Activated T-helper 1 cell treated with anti-CD3 and anti-CD28 coated beads, Interleukin-12 subunit alpha, Interleukin-12 subunit beta, Interleukin-2, Interleukin-4 antibody, amounts not matched to agents 30 ng/mL and 10 ng/mL and 1 ng/mL, durations not matched to agents 14 hours and 24 hours and 36 hours (primary cell): ENCODE measurements at regions of chr2 and their contacts with region 1.

Region 1: DNA sequence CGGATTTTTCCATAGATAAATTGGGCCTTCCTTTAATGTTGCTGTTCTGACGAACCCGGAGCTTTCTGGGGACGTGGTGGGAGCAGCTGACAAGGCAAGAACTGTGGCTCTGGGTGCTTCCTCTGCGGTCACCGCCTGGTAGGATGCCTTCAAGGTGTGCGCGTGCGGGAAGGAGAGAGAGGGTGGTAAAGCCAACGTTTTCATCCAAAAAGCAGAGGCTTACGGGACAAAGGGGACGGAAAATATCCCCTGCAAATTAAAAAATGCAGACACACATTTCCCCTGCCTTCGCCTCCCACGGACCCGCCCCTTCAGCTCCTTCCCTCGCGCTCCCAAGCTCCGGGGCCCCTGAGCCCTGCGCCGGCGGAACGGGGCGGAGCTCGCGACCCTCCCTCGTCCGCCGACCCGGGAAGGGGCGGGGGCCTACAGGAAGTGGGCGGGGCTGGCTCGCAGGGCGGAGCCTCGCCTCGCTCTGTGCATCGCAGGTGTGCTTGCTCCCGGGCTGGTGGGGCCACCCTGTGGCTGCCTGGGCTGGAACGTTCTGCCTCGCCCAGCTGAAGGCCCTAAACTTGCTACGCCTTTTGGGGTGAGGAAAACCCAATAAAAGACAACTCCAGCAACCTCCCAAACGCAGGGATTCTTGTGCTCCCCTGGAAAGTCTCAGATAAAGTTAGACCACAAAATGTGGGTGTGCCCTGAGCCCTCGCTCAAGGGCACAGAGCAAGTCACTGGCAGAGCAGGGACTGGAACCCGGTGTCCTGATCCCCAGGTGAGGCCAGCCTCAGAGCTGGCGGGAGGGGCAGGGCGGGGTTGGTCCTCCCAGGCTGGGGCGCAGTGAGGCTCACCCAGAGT is 25.4 kb upstream of the SLC66A3 start:
- DNase-seq: peak; percentile 79
- H3K4me3 Mint-ChIP-seq: peak overlapping the region; percentile 57
- H3K27ac Mint-ChIP-seq: no peak overlapping the region
- H3K4me1 Mint-ChIP-seq: peaks cover 13% of the 10 kb centered on the region
- H3K27me3 Mint-ChIP-seq: peaks cover 10% of the 10 kb centered on the region

Region 2: DNA sequence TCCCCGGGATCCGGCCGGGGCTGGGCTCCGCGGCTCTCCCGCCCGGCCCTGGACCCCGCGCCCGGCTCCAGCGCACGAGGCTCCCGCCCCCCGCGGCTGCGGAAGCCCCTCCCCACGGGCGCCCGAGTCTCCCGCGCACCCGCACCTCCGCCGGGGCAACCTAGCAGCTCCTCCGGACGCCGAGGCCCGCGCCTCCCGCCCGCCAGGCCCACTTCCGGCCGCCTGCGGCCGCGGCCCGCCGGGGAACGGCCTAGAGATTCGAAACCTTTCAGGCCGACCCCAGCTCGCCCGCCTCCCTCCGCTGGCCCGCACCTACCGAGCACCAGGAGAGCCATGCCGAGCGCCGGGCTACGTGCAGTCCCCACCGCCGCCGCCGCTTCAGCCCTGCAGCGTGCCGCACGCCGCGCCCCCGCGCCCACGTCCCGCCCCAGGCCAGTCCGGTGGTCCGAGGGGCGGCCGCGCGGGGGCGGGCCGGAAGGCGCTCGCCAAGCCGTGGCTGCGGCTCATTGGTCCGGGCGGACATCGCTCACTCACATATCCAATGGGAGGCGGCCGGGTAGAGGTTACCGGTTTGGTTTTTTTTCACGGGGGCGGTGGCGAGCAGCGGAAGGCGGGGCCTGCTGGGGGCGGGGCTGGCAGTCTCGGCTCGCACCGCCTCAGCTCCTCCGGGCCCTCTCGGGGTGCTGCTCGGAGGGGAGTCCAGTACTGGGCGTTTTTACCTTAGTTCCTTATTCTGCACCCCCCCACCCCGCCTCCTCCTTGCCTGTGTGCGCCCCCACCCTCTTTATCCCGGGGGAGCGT is 317.3 kb before region 1 on chr2 and contains the start of gene PDIA6:
- intact Hi-C with region 1: loop called (anchors 5 kb)
- DNase-seq: peak; percentile 95
- H3K4me3 Mint-ChIP-seq: peak within 1 kb of the TSS; percentile 92
- H3K27ac Mint-ChIP-seq: peak within 1 kb of the TSS; percentile 91
- H3K4me1 Mint-ChIP-seq: peaks cover 31% of the 10 kb centered on the region
- H3K27me3 Mint-ChIP-seq: peaks cover 13% of the 10 kb centered on the region
- total RNA-seq, gene PDIA6: 171 and 173 TPM in 2 replicates

Region 3: GRCh38 chr2:11056614-11057013 is 73.2 kb before region 1 on chr2:
- intact Hi-C with region 1: no loop called
- DNase-seq: no peak
- H3K4me3 Mint-ChIP-seq: no peak overlapping the region
- H3K27ac Mint-ChIP-seq: no peak overlapping the region
- H3K4me1 Mint-ChIP-seq: no peaks in the 10 kb centered on the region
- H3K27me3 Mint-ChIP-seq: peaks cover 16% of the 10 kb centered on the region

Region 4: GRCh38 chr2:11203480-11203879 is 73.7 kb after region 1 on chr2:
- intact Hi-C with region 1: loop called (anchors 2 kb)
- DNase-seq: no peak
- H3K4me3 Mint-ChIP-seq: no peak overlapping the region
- H3K27ac Mint-ChIP-seq: peak overlapping the region; percentile 10
- H3K4me1 Mint-ChIP-seq: peaks cover 16% of the 10 kb centered on the region
- H3K27me3 Mint-ChIP-seq: no peaks in the 10 kb centered on the region

Region 5: GRCh38 chr2:11446733-11447248 is 317.0 kb after region 1 on chr2:
- intact Hi-C with region 1: loop called (anchors 1 kb)
- DNase-seq: no peak
- H3K4me3 Mint-ChIP-seq: no peak overlapping the region
- H3K27ac Mint-ChIP-seq: no peak overlapping the region
- H3K4me1 Mint-ChIP-seq: no peaks in the 10 kb centered on the region
- H3K27me3 Mint-ChIP-seq: no peaks in the 10 kb centered on the region

Region 6: GRCh38 chr2:11477994-11478393 is 348.2 kb after region 1 on chr2:
- intact Hi-C with region 1: loop called (anchors 1 kb)
- DNase-seq: peak; percentile 56
- H3K4me3 Mint-ChIP-seq: no peak overlapping the region
- H3K27ac Mint-ChIP-seq: no peak overlapping the region
- H3K4me1 Mint-ChIP-seq: no peaks in the 10 kb centered on the region
- H3K27me3 Mint-ChIP-seq: peaks cover 30% of the 10 kb centered on the region

Region 7: DNA sequence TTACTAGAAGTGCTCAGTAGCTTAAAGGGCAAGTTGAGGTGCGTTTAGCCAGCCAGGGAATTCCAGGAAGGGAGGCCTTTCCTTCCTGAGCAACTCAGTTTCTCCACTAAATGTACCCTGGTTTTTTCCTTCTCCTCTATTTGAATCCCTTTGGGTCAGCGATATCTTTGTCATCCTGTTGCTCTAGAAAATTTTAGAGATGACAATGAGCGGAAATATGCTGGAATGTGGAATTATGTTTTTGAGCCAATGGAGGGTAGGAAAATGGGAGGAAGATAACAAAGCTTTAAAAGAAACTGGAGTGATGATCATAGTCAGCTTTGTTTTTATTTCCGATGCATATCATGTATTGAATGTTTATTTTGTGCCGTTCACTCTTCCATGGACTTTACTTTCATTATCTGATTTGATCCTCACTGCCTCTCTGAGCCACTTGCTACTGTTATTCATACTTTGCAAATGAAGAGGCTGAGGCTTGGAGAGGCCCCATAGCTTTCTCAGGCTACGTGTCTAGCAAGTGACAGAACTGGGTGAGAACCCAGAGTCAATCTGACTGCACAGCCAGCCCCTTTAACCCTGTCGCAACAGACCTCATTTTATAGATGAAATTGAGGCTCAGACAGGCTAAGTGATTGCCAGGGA is 472.9 kb after region 1 on chr2:
- intact Hi-C with region 1: no loop called
- DNase-seq: no peak
- H3K4me3 Mint-ChIP-seq: no peak overlapping the region
- H3K27ac Mint-ChIP-seq: no peak overlapping the region
- H3K4me1 Mint-ChIP-seq: no peaks in the 10 kb centered on the region
- H3K27me3 Mint-ChIP-seq: peaks cover 3% of the 10 kb centered on the region

Region 8: DNA sequence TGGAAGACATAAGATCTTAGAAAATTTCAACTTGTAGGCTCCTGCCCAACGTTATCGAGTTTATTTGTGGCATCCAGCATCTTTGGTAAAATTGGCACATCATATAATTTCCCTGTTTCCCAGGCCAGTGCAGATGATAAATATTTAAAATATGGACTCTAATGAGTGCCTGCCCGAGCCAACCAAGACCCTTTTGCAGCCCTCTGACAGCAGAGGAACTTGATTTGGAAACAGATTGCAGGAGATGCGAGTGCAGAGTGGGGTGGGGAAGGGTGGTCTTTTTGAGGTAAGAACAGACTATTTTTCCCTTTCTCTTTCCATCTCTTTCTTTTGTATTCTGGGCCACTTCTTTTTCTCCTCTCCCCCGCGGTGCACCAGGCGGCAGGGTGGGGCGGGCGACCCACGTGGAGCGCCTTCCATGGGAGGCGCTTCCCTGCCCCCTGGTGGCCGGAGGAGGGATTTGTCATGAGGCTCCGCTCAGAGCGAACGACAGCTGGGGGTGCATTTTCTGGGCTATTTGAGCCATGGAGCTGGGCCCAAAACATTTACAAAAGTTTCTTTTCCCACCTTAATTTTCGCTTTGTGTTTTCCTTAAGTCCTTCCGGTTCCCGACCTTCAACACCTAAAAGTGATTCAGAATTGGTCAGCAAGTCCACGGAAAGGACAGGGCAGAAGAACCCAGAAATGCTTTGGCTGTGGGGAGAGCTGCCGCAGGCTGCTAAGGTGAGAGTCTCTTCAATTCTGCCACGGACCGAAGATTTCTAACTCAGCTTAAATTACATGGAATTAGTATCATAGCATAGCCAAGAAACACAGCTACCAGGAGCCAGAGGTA is 649.3 kb after region 1 on chr2:
- intact Hi-C with region 1: loop called (anchors 5 kb)
- DNase-seq: peak; percentile 75
- H3K4me3 Mint-ChIP-seq: peak overlapping the region; percentile 76
- H3K27ac Mint-ChIP-seq: peak overlapping the region; percentile 80
- H3K4me1 Mint-ChIP-seq: peaks cover 46% of the 10 kb centered on the region
- H3K27me3 Mint-ChIP-seq: no peaks in the 10 kb centered on the region